ENCODE measurements at regions of chr17 and their contacts with region 1.

Region 1: GRCh38 chr17:81667754-81668153 is 1.2 kb downstream of the CCDC137 start:
- DNase-seq: peak; percentile 68
- ATAC-seq: 0 out of 2 replicates have a peak, but pooled peaks have one; percentile 5
- H3K4me3 Mint-ChIP-seq: peak overlapping the region; percentile 96
- H3K27ac Mint-ChIP-seq: peak overlapping the region; percentile 91
- H3K4me1 Mint-ChIP-seq: peaks cover 21% of the 10 kb centered on the region
- H3K27me3 Mint-ChIP-seq: no peaks in the 10 kb centered on the region
- CTCF ChIP-seq: no peak

Region 2: DNA sequence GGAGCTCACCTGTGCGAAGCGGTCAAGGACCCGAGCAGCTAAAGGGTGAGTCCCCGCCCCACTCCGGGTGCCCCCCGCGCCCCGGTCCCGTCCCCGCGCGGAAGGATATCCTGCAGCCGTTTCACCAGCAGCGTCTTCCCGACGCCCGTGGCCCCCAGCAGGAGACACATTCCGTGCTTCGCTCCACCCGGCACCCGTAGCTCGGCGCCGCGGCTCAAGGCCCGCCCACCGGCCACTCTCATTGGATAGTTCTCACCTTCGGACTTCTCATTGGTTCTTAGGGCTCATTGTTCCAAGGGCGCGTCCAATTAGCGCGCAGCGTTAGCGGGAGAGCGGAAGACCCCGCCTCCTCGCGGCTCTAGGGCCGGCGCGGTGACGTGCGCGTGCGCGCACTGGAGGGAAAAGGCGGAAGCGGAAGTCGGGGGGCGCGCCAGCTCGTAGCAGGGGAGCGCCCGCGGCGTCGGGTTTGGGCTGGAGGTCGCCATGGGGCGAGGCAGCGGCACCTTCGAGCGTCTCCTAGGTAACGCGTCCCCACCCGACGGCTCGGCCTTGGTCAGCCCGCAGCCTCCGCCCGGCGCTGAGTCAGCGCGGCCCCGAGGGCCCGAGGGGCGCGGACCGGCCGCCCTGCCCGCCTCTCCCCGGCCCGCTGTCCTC is 16.0 kb after region 1 on chr17 and contains the starts of genes ARL16 and HGS:
- CTCF ChIA-PET with region 1: interaction called, 10 read pairs
- POLR2A ChIA-PET with region 1: interaction called, 6 read pairs
- DNase-seq: peak; percentile 98
- ATAC-seq: peak; percentile 98
- H3K4me3 Mint-ChIP-seq: peak within 1 kb of the TSS; percentile 86
- H3K27ac Mint-ChIP-seq: peak within 1 kb of the TSS; percentile 84
- H3K4me1 Mint-ChIP-seq: peaks cover 12% of the 10 kb centered on the region
- H3K27me3 Mint-ChIP-seq: no peaks in the 10 kb centered on the region; the same call in 1 of the 2 replicates
- CTCF ChIP-seq: no peak
- total RNA-seq, gene ARL16: 44.7 to 46.7 TPM (median 45.4 TPM) in 3 replicates
- total RNA-seq, gene HGS: 83.7 to 113 TPM (median 90.8 TPM) in 3 replicates